Panc1 (cell line): ENCODE measurements at regions of chr10 and their contacts with region 1.

Region 1: GRCh38 chr10:133158756-133159610 is 1.0 kb upstream of the KNDC1 start:
- DNase-seq: no peak
- ATAC-seq: peak; percentile 61
- H3K4me3 ChIP-seq: peak overlapping the region; percentile 33 to 43; a peak in 2 of 4 replicates
- H3K27ac ChIP-seq: no peak overlapping the region
- H3K4me1 ChIP-seq: peaks cover 17% of the 10 kb centered on the region
- H3K27me3 ChIP-seq: peaks cover 8% of the 10 kb centered on the region; the same call in 1 of the 2 replicates
- CTCF ChIP-seq: no peak

Region 2: DNA sequence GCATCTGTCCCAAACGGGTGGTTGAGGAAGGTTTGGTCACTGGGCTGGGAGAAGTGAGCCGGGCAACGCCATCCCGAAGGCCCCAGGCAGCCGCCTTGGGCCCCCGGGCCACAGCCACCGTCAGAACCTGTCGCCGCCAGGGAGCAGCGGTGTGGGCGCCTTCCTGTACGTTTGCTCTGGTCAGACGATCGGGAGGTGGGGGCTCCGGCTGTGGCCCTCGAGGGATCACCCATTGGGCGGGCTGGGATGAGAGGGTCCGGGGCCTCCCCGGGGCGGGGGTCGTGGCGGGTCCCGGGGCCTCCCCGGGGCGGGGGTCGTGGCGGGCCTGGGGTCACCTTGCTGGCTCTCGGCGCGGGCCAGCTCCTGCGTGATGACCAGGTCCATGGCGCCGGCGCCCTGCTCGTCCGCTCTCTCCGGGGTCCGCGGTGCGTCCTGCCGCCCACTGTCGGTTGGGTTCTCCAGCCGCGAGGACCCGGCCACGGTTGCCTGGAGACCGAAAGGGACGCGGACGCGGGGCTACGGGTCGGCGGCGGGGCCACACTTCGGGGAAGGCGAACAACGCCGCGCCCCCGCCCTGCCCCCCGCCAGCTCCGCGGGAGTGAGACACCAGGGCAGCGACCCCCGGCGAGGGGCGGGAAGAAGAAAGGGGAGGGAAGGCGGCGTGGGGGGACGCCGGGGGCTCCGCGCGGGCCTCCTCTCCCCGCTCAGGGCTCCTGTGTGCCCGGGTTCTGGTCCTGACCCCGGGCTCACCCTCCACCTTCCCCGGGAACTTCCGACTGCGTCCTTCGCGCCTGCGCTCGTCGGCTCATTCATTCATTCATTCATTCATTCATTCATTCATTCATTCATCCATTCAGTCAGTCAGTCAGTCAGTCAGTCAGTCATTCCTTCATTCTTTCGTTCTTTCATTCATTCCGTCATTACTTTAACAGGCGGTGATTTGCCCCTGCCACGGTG is 216.6 kb before region 1 on chr10 and contains the start of gene CFAP46:
- CTCF ChIA-PET with region 1: no interaction called
- POLR2A ChIA-PET with region 1: no interaction called
- in situ Hi-C with region 1: no loop called
- intact Hi-C with region 1: no loop called
- DNase-seq: no peak
- ATAC-seq: peak; percentile 88
- H3K4me3 ChIP-seq: peak within 1 kb of the TSS; percentile 48 to 55
- H3K27ac ChIP-seq: peak within 1 kb of the TSS; percentile 51
- H3K4me1 ChIP-seq: peaks cover 3% of the 10 kb centered on the region; the same call in 1 of the 2 replicates
- H3K27me3 ChIP-seq: no peaks in the 10 kb centered on the region; the same call in 1 of the 2 replicates
- CTCF ChIP-seq: peak; percentile 51; the same call in 1 of the 2 replicates
- total RNA-seq, gene CFAP46: 1.6 TPM

Region 3: GRCh38 chr10:133087679-133088178 is 71.3 kb before region 1 on chr10 and contains the start of gene ADGRA1:
- CTCF ChIA-PET with region 1: no interaction called
- POLR2A ChIA-PET with region 1: no interaction called
- in situ Hi-C with region 1: no loop called
- intact Hi-C with region 1: no loop called
- DNase-seq: no peak
- ATAC-seq: peak; percentile 65
- H3K4me3 ChIP-seq: peak within 1 kb of the TSS in 1 of 2 experiments; percentile 27; a peak in 2 of 4 replicates
- H3K27ac ChIP-seq: no peak within 1 kb of the TSS
- H3K4me1 ChIP-seq: peaks cover 4% of the 10 kb centered on the region; the same call in 1 of the 2 replicates
- H3K27me3 ChIP-seq: peaks cover 20% of the 10 kb centered on the region
- CTCF ChIP-seq: no peak
- total RNA-seq, gene ADGRA1: 0.05 TPM

Region 4: DNA sequence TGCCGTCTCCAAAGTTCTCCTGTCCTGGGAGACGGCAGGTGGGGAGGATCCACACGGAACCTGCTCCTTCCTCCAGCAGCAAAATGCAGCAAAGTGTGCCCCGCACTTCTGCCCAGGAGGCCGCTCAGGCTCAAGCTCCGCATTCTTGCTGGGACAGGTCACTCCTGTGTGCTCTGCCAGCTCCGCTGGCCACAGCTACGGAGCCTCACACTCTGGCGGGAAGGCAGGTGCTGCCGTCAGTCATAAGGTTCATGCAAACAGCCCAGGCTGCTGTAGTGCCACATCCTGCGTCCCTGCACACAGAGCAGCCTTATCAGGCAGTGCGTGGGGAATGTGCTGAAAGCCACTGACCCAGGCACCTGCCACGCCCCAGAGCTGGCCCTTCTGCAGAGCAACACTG is 48.9 kb before region 1 on chr10:
- CTCF ChIA-PET with region 1: no interaction called
- POLR2A ChIA-PET with region 1: interaction called, 15 read pairs
- in situ Hi-C with region 1: no loop called
- intact Hi-C with region 1: no loop called
- DNase-seq: no peak
- ATAC-seq: peak; percentile 80
- H3K4me3 ChIP-seq: no peak overlapping the region
- H3K27ac ChIP-seq: no peak overlapping the region
- H3K4me1 ChIP-seq: peaks cover 8% of the 10 kb centered on the region; the same call in 1 of the 2 replicates
- H3K27me3 ChIP-seq: no peaks in the 10 kb centered on the region
- CTCF ChIP-seq: no peak

Region 5: GRCh38 chr10:133230387-133231195 is 71.6 kb after region 1 on chr10:
- CTCF ChIA-PET with region 1: no interaction called
- POLR2A ChIA-PET with region 1: interaction called, 10 read pairs
- in situ Hi-C with region 1: no loop called
- intact Hi-C with region 1: no loop called
- DNase-seq: no peak
- ATAC-seq: peak; percentile 53
- H3K4me3 ChIP-seq: no peak overlapping the region
- H3K27ac ChIP-seq: no peak overlapping the region
- H3K4me1 ChIP-seq: no peaks in the 10 kb centered on the region
- H3K27me3 ChIP-seq: peaks cover 3% of the 10 kb centered on the region; the same call in 1 of the 2 replicates
- CTCF ChIP-seq: no peak

Region 6: DNA sequence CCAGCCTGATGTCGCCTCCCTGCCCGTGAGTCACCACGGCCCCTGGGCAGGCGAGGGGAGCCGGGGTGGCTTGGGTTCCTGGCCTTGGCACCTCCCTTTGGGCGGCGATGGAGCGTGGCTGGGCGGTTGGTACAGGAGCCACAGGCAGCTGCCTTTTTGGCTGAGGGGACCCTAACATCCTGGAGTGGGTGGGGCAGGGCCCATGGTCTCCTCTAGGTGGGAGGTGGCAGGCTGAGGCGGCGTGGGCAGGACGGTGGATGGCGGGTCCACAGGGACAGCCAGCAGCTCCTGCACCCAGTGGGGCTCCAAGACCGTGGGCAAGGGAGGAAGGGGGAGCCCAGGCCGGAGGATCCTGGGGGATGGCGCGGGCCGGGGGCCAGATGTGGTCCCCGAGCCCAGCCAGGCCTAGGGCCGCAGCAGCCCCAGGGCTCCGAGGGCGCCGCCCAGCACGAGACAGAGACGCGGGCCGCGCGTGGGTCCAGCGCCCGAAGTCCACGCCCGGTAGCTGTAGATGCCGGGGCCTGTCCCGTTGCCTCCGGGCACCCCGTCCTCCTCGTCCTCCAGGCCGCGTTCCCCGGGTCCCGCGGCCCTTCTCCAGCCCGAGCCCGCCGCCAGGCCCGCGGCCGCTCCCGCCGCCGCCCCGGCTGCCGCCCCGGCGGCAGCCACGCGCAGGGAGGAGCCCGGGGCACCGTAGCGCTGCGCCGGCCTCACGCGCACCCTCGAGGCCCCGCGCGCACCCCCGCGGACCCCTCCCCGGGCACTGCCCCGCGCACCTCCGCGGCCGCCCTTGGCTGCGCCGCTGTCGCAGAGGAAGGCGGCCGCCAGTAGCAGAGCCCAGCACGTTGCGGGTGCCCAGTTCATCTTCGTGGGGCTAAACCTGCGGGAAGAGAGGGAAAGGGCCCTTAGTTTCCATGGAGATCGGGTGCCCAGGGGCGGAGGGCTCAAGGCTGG is 264.1 kb after region 1 on chr10:
- CTCF ChIA-PET with region 1: no interaction called
- POLR2A ChIA-PET with region 1: no interaction called
- in situ Hi-C with region 1: no loop called
- intact Hi-C with region 1: no loop called
- DNase-seq: no peak
- ATAC-seq: peak; percentile 63
- H3K4me3 ChIP-seq: peak overlapping the region; percentile 8 to 26; a peak in 3 of 4 replicates
- H3K27ac ChIP-seq: no peak overlapping the region
- H3K4me1 ChIP-seq: peaks cover 21% of the 10 kb centered on the region
- H3K27me3 ChIP-seq: no peaks in the 10 kb centered on the region
- CTCF ChIP-seq: no peak